ENCODE measurements at regions of chr12 and their contacts with region 1.

Region 1: DNA sequence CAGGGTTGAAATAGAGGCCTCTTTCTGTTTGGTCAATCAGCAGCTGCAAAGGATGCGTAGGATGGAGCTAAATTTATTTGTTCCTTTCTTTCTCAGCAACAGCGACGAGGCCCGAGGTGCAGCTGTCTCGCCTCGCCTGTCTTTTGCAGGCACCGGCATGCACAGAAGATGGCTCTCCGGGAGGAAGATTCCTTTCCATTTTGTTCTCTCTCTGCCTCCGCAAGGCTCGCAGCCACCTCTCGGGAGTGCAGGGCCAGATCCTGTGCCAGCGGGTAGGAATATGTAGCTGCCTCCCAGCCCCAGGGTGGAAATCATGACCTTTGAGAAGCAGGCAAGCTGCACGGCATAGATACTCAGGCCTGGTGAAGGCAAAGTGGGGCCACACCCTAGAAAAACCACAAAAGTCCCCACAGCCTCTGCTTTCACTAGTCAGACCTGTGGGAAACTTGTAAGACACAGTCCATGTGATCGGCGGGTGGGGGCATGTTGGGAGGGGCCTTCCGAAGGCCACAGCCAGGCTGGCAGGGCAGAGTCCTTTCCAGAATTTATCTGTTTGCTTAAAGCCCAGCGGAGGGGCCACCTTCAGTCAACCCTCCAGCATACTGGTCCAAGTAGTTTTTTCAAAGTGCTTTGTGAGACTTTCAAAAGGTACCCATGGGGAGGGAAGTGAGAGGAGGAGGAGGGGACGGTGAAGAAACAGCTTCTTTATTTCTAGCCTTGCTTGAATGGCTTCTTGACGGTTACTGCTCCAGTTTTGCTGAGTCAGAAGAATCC is at the start of gene MAP1LC3B2:
- DNase-seq: peak; percentile 93
- H3K4me3 Mint-ChIP-seq: peak within 1 kb of the TSS; percentile 60
- H3K27ac Mint-ChIP-seq: peak within 1 kb of the TSS; percentile 91
- H3K4me1 Mint-ChIP-seq: peaks cover 11% of the 10 kb centered on the region
- H3K27me3 Mint-ChIP-seq: no peaks in the 10 kb centered on the region
- CTCF ChIP-seq: no peak
- total RNA-seq, gene MAP1LC3B2: 3.4 and 5.1 TPM in 2 replicates

Region 2: GRCh38 chr12:116525418-116526001 is 33.8 kb before region 1 on chr12:
- CTCF ChIA-PET with region 1: interaction called, 3 read pairs
- POLR2A ChIA-PET with region 1: interaction called, 13 read pairs
- intact Hi-C with region 1: loop called (anchors 2 kb)
- DNase-seq: peak; percentile 92
- H3K4me3 Mint-ChIP-seq: peak overlapping the region; percentile 63
- H3K27ac Mint-ChIP-seq: peak overlapping the region; percentile 81
- H3K4me1 Mint-ChIP-seq: peaks cover 47% of the 10 kb centered on the region
- H3K27me3 Mint-ChIP-seq: no peaks in the 10 kb centered on the region
- CTCF ChIP-seq: no peak

Region 3: DNA sequence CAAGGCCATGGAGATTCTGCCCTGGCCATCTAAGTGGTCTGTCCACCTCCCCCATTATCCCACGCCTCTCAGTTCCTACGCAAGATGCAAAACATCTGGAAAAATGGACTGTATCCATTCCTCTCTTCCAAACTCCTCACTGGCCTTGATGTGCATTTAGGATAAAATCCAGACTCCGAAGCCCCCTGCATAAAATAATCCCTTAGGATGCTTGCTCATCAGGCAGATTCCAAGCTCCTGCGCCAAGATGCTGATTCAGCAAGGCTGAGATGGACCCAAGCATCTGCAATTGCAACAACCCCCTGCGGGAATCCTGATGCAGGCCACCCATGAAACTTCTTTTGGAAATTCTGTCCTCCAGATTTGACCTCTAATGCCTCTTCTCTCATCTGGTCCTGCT is 97.0 kb after region 1 on chr12:
- CTCF ChIA-PET with region 1: no interaction called
- POLR2A ChIA-PET with region 1: no interaction called
- intact Hi-C with region 1: no loop called
- DNase-seq: no peak
- H3K4me3 Mint-ChIP-seq: no peak overlapping the region
- H3K27ac Mint-ChIP-seq: no peak overlapping the region
- H3K4me1 Mint-ChIP-seq: peaks cover 17% of the 10 kb centered on the region
- H3K27me3 Mint-ChIP-seq: peaks cover 51% of the 10 kb centered on the region
- CTCF ChIP-seq: no peak